ENCODE measurements at regions of chr11 and their contacts with region 1.

Region 1: GRCh38 chr11:44611687-44612434 is 46.4 kb downstream of the CD82 start:
- DNase-seq: peak; percentile 86
- ATAC-seq: peak; percentile 54
- H3K4me3 ChIP-seq: no peak overlapping the region
- H3K27ac ChIP-seq: peak overlapping the region; percentile 52
- H3K4me1 ChIP-seq: peaks cover 74% of the 10 kb centered on the region
- H3K27me3 ChIP-seq: no peaks in the 10 kb centered on the region
- CTCF ChIP-seq: no peak
- EP300 ChIP-seq: peak in 1 of 2 experiments; percentile 38; a peak in 2 of 4 replicates
- POLR2A ChIP-seq: no peak
- RAD21 ChIP-seq: no peak

Region 2: GRCh38 chr11:44565211-44565952 is 46.5 kb before region 1 on chr11 and contains the start of gene CD82:
- CTCF ChIA-PET with region 1: interaction called, 477 read pairs
- POLR2A ChIA-PET with region 1: interaction called, 434 read pairs
- RAD21 ChIA-PET with region 1: interaction called, 190 read pairs
- SMC1A ChIA-PET with region 1: interaction called, 433 read pairs
- in situ Hi-C with region 1: loop called (anchors 5 kb)
- intact Hi-C with region 1: loop called (anchors 1 kb)
- DNase-seq: peak; percentile 84
- ATAC-seq: peak; percentile 84
- H3K4me3 ChIP-seq: peak within 1 kb of the TSS; percentile 89
- H3K27ac ChIP-seq: peak within 1 kb of the TSS; percentile 83
- H3K4me1 ChIP-seq: peaks cover 38% of the 10 kb centered on the region
- H3K27me3 ChIP-seq: no peaks in the 10 kb centered on the region
- CTCF ChIP-seq: peak in 2 of 3 experiments; percentile 17 to 32; a peak in 2 of 6 replicates
- EP300 ChIP-seq: no peak
- POLR2A ChIP-seq: peak; percentile 96
- RAD21 ChIP-seq: no peak
- polyA plus RNA-seq, gene CD82: 5.2 to 8.2 TPM

Region 3: DNA sequence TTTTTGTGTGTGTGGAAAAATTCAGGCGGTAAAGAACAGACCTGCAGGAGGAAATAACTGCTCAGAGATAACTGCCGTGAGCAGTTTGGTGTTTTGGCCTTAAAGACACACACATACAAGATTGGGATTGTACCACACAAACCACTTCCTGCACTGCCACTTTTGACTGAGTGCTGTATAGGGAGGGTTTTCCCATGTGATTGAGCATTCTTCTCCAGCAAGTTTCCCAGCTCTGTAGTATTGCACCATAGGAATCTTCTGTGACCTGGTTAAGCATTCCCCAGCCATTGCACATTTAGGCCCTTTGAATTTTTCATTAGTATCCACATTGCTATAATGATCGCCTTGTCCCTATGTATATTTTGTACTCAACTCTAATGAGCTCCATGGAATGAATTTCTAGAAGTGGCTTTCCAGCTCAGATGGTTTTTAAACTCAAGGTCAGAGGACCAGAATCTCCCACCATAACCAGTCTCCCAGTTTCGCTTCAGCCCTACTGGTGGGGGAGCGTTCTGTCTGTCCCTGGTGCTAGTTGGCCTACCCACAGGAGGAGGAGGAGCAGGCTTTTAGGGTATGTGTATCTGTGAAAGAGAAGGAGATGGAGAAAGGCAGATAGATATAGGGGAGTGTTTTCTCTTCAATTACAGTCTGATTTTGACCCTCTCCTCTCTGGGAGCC is 37.1 kb before region 1 on chr11:
- CTCF ChIA-PET with region 1: interaction called, 19 read pairs
- POLR2A ChIA-PET with region 1: interaction called, 434 read pairs
- RAD21 ChIA-PET with region 1: interaction called, 49 read pairs
- SMC1A ChIA-PET with region 1: interaction called, 114 read pairs
- in situ Hi-C with region 1: loop called (anchors 5 kb)
- intact Hi-C with region 1: loop called (anchors 1 kb)
- DNase-seq: peak; percentile 66
- ATAC-seq: peak; percentile 66
- H3K4me3 ChIP-seq: peak overlapping the region; percentile 38; the same call in 1 of the 2 replicates
- H3K27ac ChIP-seq: peak overlapping the region; percentile 88
- H3K4me1 ChIP-seq: peaks cover 63% of the 10 kb centered on the region
- H3K27me3 ChIP-seq: no peaks in the 10 kb centered on the region
- CTCF ChIP-seq: no peak
- EP300 ChIP-seq: peak; percentile 23 to 37; a peak in 1 of 4 replicates
- POLR2A ChIP-seq: no peak
- RAD21 ChIP-seq: no peak

Region 4: GRCh38 chr11:44582636-44583035 is 29.2 kb before region 1 on chr11:
- CTCF ChIA-PET with region 1: interaction called, 11 read pairs
- POLR2A ChIA-PET with region 1: interaction called, 434 read pairs
- RAD21 ChIA-PET with region 1: interaction called, 23 read pairs
- SMC1A ChIA-PET with region 1: interaction called, 29 read pairs
- in situ Hi-C with region 1: no loop called
- intact Hi-C with region 1: no loop called
- DNase-seq: no peak
- ATAC-seq: no peak
- H3K4me3 ChIP-seq: no peak overlapping the region
- H3K27ac ChIP-seq: no peak overlapping the region
- H3K4me1 ChIP-seq: peaks cover 13% of the 10 kb centered on the region
- H3K27me3 ChIP-seq: no peaks in the 10 kb centered on the region
- CTCF ChIP-seq: no peak
- EP300 ChIP-seq: no peak
- POLR2A ChIP-seq: no peak
- RAD21 ChIP-seq: no peak

Region 5: DNA sequence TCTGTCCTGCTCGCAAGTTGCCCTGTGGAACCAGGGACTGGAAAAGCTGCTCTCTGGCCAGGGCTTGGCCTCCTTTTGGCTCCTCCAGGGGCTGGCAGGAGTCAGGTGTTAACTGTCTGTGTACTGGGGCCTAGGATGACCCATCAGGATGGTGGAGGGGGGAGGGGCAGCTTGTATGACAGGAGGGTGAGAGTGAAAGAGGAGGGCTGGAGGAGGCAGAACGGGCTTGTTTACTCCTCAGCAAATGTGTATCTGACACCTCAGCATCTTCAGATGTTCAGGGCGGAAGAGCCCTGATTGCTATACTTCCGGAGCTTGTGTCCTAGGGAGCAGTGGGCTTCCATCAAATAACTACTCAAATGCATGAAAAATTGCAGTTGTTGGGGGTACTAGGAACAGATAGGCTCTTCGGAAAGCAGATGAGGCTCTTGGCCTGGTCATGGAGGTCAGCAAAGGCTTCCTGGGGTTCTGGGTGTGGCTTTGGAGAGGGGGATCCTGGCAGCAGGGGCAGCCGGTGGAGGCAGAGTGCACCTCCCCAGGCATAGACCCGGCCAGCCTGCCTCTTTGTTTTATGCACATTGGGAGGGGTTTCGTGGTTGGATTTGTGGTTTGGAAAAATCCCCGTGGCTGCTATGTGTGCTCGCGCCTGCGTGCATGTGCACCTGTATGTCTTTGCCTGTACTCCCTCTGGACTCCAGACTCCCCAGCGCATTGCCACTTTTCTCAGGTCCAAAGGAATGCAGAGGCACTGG is 15.2 kb before region 1 on chr11:
- CTCF ChIA-PET with region 1: interaction called, 64 read pairs
- POLR2A ChIA-PET with region 1: interaction called, 136 read pairs
- RAD21 ChIA-PET with region 1: interaction called, 196 read pairs
- SMC1A ChIA-PET with region 1: interaction called, 160 read pairs
- in situ Hi-C with region 1: no loop called
- intact Hi-C with region 1: loop called (anchors 1 kb)
- DNase-seq: peak; percentile 84
- ATAC-seq: peak; percentile 73
- H3K4me3 ChIP-seq: peak overlapping the region; percentile 49; the same call in 1 of the 2 replicates
- H3K27ac ChIP-seq: peak overlapping the region; percentile 91
- H3K4me1 ChIP-seq: peaks cover 71% of the 10 kb centered on the region
- H3K27me3 ChIP-seq: no peaks in the 10 kb centered on the region
- CTCF ChIP-seq: no peak
- EP300 ChIP-seq: no peak
- POLR2A ChIP-seq: peak; percentile 63; the same call in 1 of the 2 replicates
- RAD21 ChIP-seq: no peak

Region 6: DNA sequence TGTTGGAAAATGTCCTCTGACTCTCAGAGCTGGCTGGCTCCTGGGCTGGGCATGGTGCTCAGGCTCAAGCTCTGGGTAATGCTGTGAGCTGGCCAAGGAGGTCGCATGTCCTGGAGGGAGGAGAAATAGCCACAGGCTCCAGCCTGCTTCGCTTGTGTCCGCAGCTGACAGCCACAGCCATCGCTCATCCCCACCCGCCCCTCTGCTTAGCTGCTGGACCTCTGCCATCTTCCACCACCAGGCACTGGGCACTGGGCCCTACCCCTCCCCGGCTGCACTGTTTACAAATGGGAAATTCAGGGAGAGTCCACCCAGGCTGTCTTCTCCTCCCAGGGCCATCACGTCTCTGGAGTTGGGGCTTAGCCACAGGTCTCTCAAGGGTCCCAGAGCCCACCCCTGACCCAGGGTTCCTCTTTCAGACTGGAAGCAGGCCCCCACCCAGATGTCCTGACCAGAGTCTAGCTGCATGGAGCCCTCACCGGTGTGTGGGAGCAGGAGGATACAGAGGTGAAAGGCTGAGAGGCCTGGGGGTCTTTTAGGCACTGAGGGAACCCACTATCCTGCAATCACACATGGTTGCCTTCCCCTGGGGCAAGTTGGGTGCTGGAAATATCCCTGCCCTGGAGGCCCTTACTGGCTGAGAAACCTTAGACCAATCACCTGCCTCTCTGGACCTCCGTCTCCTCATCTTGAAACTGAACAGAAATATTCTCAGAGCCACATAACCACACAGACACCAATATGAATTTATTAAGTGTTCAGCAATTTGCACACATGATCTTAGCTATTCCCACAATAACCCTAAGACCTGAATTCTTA is 16.3 kb after region 1 on chr11:
- CTCF ChIA-PET with region 1: interaction called, 25 read pairs
- POLR2A ChIA-PET with region 1: interaction called, 3 read pairs
- RAD21 ChIA-PET with region 1: interaction called, 7 read pairs
- SMC1A ChIA-PET with region 1: interaction called, 19 read pairs
- in situ Hi-C with region 1: no loop called
- intact Hi-C with region 1: no loop called
- DNase-seq: no peak
- ATAC-seq: peak; percentile 80
- H3K4me3 ChIP-seq: no peak overlapping the region
- H3K27ac ChIP-seq: peak overlapping the region; percentile 36; the same call in 1 of the 2 replicates
- H3K4me1 ChIP-seq: peaks cover 13% of the 10 kb centered on the region
- H3K27me3 ChIP-seq: no peaks in the 10 kb centered on the region
- CTCF ChIP-seq: no peak
- EP300 ChIP-seq: no peak
- POLR2A ChIP-seq: no peak
- RAD21 ChIP-seq: no peak

Region 7: DNA sequence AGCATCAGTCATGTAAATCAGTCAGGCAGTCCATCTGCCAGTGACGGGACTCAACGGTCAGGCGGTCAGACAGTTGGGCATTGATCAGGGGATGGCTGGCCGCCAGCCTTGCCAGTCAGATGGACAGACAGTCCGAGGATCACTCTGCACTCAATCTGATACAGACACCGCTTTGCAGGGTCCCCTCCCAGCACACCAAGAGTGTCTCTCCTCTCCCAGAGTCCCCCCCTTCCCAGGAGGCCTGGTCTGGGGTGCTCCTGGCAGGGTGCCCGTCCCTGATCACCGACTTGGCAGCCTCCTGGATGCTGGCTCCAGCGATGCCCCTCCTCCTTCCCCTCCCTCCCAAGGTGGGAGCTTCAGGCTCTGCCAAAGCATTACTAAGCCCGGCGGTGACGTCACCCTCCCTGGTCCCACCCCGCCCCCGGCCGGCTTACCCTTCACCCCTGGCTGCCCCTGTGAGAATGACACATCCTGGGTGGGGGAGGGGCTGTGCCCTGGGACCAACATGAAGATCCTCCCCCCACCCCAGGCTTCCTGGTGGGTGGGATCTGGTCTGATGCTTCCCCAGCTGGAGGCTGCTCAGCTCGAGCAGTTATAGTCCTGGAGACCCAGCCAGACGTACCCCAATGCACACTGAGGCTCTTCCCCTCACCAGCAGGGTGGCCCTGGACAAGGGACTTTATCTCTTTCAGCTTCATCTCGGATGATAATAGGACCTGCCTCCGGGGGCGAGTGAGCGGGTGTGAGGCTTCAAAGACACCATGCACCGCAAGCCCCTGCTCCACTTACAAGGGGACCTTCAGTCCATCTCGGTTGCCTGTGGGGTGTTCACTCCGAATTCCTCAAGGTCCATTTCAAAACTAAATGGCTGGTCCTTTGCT is 22.8 kb after region 1 on chr11:
- CTCF ChIA-PET with region 1: interaction called, 25 read pairs
- POLR2A ChIA-PET with region 1: no interaction called
- RAD21 ChIA-PET with region 1: interaction called, 3 read pairs
- SMC1A ChIA-PET with region 1: interaction called, 19 read pairs
- in situ Hi-C with region 1: no loop called
- intact Hi-C with region 1: no loop called
- DNase-seq: no peak
- ATAC-seq: peak; percentile 37
- H3K4me3 ChIP-seq: no peak overlapping the region
- H3K27ac ChIP-seq: no peak overlapping the region
- H3K4me1 ChIP-seq: no peaks in the 10 kb centered on the region
- H3K27me3 ChIP-seq: no peaks in the 10 kb centered on the region
- CTCF ChIP-seq: no peak
- EP300 ChIP-seq: no peak
- POLR2A ChIP-seq: no peak
- RAD21 ChIP-seq: no peak